Activated naive CD4-positive, alpha-beta T cell treated with anti-CD3 and anti-CD28 coated beads for 36 hours (primary cell): ENCODE measurements at regions of chr1 and their contacts with region 1.

Region 1: DNA sequence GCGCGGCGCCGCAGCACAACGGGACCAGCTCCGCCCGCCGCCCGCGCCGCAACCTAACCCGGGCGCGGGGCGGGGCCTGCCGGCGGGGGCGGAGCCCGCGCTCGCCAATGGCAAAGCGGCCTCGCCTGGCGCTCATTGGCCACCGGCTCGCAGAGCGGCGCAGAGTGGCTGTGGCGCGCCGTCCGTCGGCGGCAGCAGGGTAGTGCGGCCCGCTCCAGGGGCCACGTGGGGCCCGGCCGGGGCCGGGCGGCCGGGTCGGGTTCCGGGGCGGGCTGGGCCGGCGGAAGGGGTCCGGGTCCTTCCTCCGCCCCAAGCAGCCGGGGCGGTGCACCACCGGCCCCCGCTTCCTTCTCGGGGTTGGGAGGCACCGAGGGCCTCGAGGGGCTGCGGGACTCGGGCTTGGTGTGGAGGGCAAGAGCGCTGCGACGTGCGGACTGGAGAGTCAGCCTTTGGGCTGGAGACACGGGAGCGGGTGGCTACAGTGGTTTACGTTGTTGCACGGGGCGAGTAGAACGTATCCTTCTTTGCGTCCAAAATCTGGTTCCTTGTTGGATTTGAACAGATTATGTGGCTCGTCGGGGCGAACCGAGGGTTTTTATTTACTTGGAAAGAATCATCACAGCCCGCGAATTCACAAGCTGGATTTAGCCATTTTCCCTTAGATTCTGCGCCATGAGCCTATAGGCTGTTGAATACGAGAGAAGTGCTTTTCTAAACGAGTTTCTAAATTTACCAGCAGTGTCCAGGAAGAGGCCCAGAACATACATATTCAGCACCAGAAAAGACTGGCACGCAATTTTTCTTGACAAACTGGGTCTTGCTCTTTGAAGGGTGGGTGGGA is at the start of gene SRM:
- DNase-seq: peak; percentile 89
- H3K4me3 Mint-ChIP-seq: peak within 1 kb of the TSS; percentile 95
- H3K27ac Mint-ChIP-seq: peak within 1 kb of the TSS; percentile 82
- H3K4me1 Mint-ChIP-seq: peaks cover 45% of the 10 kb centered on the region
- H3K27me3 Mint-ChIP-seq: no peaks in the 10 kb centered on the region
- total RNA-seq, gene SRM: 207 to 222 TPM

Region 2: GRCh38 chr1:11099310-11100149 is 39.3 kb after region 1 on chr1 and contains the start of gene EXOSC10:
- CTCF ChIA-PET with region 1: interaction called, 4 read pairs
- intact Hi-C with region 1: loop called (anchors 1 kb)
- DNase-seq: peak; percentile 95
- H3K4me3 Mint-ChIP-seq: peak within 1 kb of the TSS; percentile 96
- H3K27ac Mint-ChIP-seq: peak within 1 kb of the TSS; percentile 90
- H3K4me1 Mint-ChIP-seq: peaks cover 8% of the 10 kb centered on the region
- H3K27me3 Mint-ChIP-seq: no peaks in the 10 kb centered on the region
- total RNA-seq, gene EXOSC10: 57.9 to 59.3 TPM